Right cardiac atrium (tissue), 5 donors: ENCODE measurements at regions of chr6 and their contacts with region 1.

Region 1: DNA sequence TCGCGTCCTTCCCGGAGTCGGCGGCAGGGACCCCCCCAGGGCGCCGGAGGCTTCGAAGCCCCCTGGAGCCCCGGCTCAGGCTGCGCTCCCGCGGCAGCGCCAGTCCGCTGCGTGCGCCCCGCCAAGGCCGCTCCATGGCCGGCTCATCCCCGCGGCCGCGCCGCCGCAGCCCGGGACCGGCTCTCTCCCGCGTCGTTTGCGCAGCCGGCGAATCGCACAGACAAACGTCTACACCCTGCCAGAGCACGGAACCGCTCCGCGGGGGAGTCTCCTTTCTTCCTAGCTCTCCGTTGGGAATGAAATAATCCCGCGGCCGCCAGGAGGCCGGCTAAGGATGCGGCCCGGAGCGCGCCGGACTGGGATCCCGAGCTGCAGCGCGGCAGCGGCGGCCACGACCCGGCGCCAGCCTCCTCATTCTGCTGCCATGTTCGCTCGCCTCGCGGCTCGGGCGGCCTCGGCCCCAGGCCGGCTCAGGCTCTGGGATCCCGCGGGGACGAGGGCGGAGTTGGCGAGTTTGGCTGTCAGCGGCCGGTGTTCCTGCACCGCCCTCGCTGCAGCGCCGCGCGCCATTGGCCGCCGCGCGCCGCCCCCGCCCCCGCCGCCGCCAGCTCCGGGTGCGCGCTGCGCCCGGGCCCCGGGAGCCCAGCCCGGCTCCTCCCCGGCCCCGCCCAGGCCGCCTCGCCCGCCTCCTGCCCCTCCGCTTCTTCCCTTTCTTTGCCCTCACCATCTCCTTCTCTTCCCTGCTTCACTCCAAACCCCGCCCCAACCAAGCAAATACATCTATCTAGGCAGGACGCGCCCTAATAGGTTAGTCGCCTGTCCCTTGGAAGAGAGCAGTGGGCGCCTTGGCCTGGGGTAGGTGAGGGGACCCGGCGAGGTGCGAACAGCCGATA is at the start of gene GFOD1:
- DNase-seq: peak; percentile 92 to 97 (median 97)
- ATAC-seq: peak; percentile 91 to 93
- H3K4me3 ChIP-seq: peak within 1 kb of the TSS; percentile 82
- H3K27ac ChIP-seq: peak within 1 kb of the TSS; percentile 75
- H3K4me1 ChIP-seq: peaks cover 6% of the 10 kb centered on the region
- H3K27me3 ChIP-seq: no peaks in the 10 kb centered on the region
- total RNA-seq, gene GFOD1: 51.0 to 81.7 (median 54.7) TPM

Region 2: GRCh38 chr6:13526727-13527670 is 39.6 kb after region 1 on chr6:
- intact Hi-C with region 1: loop called in 1 of 4 experiments (anchors 5 kb)
- DNase-seq: peak; percentile 26 to 65 (median 54)
- ATAC-seq: peak; percentile 62 to 67
- H3K4me3 ChIP-seq: no peak overlapping the region
- H3K27ac ChIP-seq: peak overlapping the region; percentile 61
- H3K4me1 ChIP-seq: peaks cover 2% of the 10 kb centered on the region
- H3K27me3 ChIP-seq: no peaks in the 10 kb centered on the region

Region 3: DNA sequence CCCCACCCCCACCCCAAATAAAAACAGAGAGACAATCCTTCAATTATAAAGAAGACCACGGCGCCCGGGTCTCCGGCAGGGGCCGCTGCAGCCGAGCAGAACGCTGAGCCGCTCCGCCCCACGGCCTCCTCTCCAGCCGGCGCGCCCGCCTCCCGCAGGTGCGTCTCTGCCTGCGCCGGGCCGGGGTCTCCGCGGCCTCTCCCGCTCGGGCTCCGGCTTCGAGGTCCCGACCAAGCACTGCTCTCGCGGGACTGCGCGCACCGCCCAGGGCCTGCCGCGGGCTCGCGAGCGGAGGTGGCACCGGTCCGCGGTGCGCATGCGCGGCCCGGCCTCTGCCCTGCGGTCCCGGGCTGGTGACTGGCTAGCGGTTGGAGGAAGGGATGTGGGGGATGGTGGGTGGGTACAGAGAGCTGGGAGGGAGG is 86.8 kb after region 1 on chr6:
- intact Hi-C with region 1: loop called in 2 of 4 experiments (anchors 10 kb)
- DNase-seq: peak; percentile 94 to 97 (median 97)
- ATAC-seq: peak; percentile 98
- H3K4me3 ChIP-seq: peak overlapping the region; percentile 68
- H3K27ac ChIP-seq: peak overlapping the region; percentile 77
- H3K4me1 ChIP-seq: peaks cover 3% of the 10 kb centered on the region
- H3K27me3 ChIP-seq: no peaks in the 10 kb centered on the region

Region 4: GRCh38 chr6:13807696-13808095 is 320.3 kb after region 1 on chr6:
- intact Hi-C with region 1: no loop called
- DNase-seq: no peak
- ATAC-seq: no peak
- H3K4me3 ChIP-seq: no peak overlapping the region
- H3K27ac ChIP-seq: no peak overlapping the region
- H3K4me1 ChIP-seq: peaks cover 4% of the 10 kb centered on the region
- H3K27me3 ChIP-seq: no peaks in the 10 kb centered on the region